ENCODE measurements at regions of chr5 and their contacts with region 1.

Region 1: GRCh38 chr5:1523771-1524480 is at the start of gene LPCAT1:
- DNase-seq: no peak
- H3K4me3 ChIP-seq: peak within 1 kb of the TSS; percentile 90 to 91 (median 90)
- H3K27ac ChIP-seq: peak within 1 kb of the TSS; percentile 91 to 92 (median 92)
- H3K4me1 ChIP-seq: peaks cover 9 to 30% (median 26%) of the 10 kb centered on the region in 4 donors
- H3K27me3 ChIP-seq: no peaks in the 10 kb centered on the region
- CTCF ChIP-seq: peak in 1 of 3 experiments; percentile 27
- EP300 ChIP-seq: no peak
- POLR2A ChIP-seq: no peak
- total RNA-seq, gene LPCAT1: 22.5 to 51.7 (median 35.0) TPM

Region 2: DNA sequence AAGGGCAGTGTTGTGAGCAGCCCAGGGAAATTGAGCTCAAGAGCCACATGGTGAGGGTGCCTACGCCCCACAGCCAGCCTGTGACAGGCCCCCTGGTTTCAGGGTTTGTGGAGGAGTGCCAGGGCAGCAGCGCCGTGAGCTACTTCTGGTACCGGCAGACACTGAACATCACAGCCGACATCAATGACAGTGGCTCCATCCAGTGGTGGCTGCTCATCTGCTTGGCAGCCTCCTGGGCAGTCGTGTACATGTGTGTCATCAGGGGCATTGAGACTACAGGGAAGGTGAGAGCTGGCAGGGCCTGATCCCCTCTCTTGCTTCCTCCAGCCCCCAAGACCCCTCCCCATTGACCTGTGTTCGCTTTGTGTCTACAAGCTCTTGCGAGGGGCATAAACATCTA is 288.5 kb before region 1 on chr5:
- intact Hi-C with region 1: no loop called
- DNase-seq: no peak
- H3K4me3 ChIP-seq: no peak overlapping the region
- H3K27ac ChIP-seq: no peak overlapping the region
- H3K4me1 ChIP-seq: no peaks in the 10 kb centered on the region
- H3K27me3 ChIP-seq: peaks cover 0 to 42% (median 0%) of the 10 kb centered on the region in 4 donors
- CTCF ChIP-seq: no peak
- EP300 ChIP-seq: no peak
- POLR2A ChIP-seq: no peak

Region 3: GRCh38 chr5:1312993-1313833 is 210.7 kb before region 1 on chr5:
- intact Hi-C with region 1: no loop called
- DNase-seq: no peak
- H3K4me3 ChIP-seq: no peak overlapping the region
- H3K27ac ChIP-seq: no peak overlapping the region
- H3K4me1 ChIP-seq: peaks cover 0 to 12% (median 11%) of the 10 kb centered on the region in 4 donors
- H3K27me3 ChIP-seq: peaks cover 0 to 34% (median 0%) of the 10 kb centered on the region in 4 donors
- CTCF ChIP-seq: no peak
- EP300 ChIP-seq: no peak
- POLR2A ChIP-seq: no peak

Region 4: DNA sequence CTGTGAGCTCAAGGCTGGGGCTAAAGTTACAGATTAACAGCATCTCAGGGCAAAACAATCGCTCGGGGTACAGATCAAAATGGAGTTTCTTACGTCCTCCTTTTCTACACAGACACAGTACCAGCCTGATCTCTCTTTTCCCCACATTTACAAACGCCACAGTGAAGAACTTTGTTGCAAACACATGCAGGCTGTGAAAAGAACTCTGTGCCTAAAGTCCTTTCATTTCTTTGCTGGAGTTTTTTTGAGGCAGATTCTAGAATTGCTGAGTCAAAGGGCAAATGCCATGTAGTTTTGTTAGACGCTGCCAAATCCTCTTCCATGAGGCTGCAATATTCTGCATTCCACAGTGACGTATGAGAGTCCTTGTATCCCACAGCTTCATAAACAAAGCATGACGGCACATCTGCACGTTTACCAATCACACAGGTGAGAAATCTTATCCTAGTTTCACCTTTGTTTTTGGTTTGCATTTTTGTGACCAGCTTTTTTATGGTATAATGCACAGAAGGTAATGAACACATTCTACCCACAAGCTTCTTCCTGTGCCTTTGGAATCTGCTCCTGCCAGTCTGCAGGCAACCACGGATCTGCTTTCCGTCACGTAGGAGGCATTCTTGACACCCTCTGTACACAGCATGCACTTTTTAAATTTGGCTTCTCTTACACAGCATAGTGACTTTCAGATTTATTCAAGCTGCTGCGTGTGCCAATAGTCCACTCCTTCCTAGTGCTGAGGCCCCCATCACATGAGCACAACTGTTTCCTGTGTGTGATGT is 44.5 kb after region 1 on chr5:
- intact Hi-C with region 1: loop called (anchors 5 kb)
- DNase-seq: no peak
- H3K4me3 ChIP-seq: no peak overlapping the region
- H3K27ac ChIP-seq: peak overlapping the region; percentile 57 to 78 (median 72)
- H3K4me1 ChIP-seq: peaks cover 20 to 25% (median 22%) of the 10 kb centered on the region in 4 donors
- H3K27me3 ChIP-seq: no peaks in the 10 kb centered on the region
- CTCF ChIP-seq: no peak
- EP300 ChIP-seq: no peak
- POLR2A ChIP-seq: no peak

Region 5: DNA sequence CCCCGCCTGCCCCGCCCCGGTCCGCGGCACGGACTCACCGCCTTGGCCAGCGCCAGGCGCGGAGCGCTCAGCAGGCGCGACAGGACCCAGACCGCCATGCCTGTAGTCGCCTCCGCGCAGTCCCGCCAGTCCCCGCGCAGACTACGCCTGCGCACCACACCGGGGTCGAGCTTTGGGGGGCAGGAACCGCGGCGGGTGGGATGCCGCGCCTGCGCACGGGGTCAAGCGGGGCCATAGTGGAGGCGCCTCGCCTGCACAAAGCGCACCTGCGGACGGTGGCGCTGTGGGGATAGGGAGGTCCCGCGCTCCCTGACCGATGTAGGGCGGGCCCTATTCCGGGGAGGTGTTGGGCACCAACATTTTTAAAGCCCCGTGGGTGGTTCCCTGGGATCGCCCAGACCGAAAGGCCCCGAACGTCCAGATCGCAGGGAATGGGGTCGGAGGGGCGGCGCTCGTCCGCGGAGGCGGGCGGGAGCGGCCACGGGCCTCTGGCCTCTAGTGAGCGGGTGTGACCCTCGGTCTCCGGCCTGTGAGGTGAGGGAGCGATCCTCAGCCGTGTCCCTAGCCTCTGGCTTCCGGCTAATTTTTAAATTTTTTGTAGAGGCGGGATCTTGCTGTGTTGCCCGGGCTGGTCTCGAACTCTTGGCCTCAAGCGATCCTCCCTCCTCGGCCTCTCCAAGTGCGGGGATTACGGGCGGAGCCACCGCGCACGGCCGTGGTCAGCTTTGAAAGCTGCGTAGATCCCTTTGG is 70.6 kb after region 1 on chr5:
- intact Hi-C with region 1: loop called (anchors 10 kb)
- DNase-seq: no peak
- H3K4me3 ChIP-seq: peak overlapping the region; percentile 52 to 71 (median 66)
- H3K27ac ChIP-seq: peak overlapping the region; percentile 72 to 83 (median 80)
- H3K4me1 ChIP-seq: peaks cover 0 to 13% (median 11%) of the 10 kb centered on the region in 4 donors
- H3K27me3 ChIP-seq: no peaks in the 10 kb centered on the region
- CTCF ChIP-seq: peak; percentile 33 to 45 (median 44)
- EP300 ChIP-seq: no peak
- POLR2A ChIP-seq: no peak

Region 6: DNA sequence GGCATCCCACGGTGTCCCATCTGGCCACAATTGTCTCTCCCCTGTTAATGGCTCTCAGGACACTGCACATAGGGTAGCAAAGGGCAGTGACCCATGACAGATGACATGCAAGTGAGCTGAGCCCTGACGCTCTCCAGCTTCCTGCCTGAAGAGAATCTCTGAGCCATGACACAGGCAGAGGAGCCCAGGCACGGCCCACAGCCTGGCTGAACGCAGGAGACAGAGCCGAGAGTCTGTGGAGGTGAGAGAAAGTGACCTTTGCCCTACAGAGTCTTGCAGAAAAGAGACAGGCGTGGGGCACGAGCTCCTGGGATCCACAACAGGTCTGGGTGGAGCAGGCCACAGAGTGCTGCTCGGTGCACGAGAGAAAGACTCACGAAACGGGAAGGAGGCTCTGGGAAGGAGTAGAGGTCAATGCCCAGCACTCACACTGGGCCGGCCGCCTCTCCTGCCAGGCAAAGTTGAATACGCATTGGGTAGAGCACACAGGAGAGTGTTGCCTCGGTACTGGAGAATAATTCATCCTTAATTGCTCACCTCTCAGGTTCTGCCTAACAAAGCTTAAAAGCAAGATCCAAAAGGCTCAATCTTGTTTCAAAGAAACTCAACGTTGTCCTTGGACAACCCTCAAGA is 185.4 kb after region 1 on chr5:
- intact Hi-C with region 1: no loop called
- DNase-seq: no peak
- H3K4me3 ChIP-seq: no peak overlapping the region
- H3K27ac ChIP-seq: no peak overlapping the region
- H3K4me1 ChIP-seq: no peaks in the 10 kb centered on the region
- H3K27me3 ChIP-seq: peaks cover 0 to 42% (median 5%) of the 10 kb centered on the region in 4 donors
- CTCF ChIP-seq: no peak
- EP300 ChIP-seq: no peak
- POLR2A ChIP-seq: no peak

Region 7: DNA sequence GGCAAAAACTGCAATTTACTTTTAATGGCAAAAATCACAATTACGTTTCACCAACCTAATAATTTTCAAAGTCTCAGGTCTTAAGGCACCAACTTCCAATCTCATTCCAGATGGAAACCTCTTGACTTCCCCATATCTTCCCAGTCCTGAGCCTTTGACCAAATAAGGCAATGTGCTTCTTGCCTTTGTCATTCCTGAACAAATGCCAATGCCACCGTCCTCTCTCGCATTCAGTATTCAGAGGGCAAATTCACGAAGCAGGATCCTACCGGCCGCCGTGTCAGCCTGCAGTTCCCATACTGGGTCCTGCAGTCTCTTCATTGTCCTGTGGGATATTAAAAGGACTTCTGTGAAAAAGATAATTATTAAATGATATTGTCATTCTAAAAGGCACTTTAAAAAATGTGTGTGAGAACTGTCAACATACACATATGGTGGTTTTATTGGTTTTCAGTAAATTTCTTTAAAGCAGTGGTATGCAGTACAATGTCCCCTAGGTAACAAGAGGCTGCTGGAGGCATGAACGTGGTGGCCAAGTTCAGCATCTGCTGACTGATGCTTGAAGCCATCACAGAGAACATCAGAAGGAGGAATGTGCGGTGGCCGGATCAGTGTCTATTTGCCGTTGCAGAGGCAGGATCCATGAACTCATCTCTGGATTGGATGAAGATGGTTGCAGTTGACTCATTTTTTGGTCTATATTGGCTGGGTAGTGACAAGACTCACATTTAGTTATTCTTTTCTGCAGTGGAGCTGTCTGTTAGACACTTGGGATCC is 460.2 kb after region 1 on chr5:
- intact Hi-C with region 1: no loop called
- DNase-seq: peak; percentile 82
- H3K4me3 ChIP-seq: no peak overlapping the region
- H3K27ac ChIP-seq: no peak overlapping the region
- H3K4me1 ChIP-seq: no peaks in the 10 kb centered on the region
- H3K27me3 ChIP-seq: peaks cover 0 to 4% (median 0%) of the 10 kb centered on the region in 4 donors
- CTCF ChIP-seq: no peak
- EP300 ChIP-seq: no peak
- POLR2A ChIP-seq: no peak